Calu3 (cell line): ENCODE measurements at regions of chr15 and their contacts with region 1.

Region 1: GRCh38 chr15:89714775-89715174 is 24.2 kb downstream of the WDR93 start:
- DNase-seq: no peak
- H3K4me3 Mint-ChIP-seq: no peak overlapping the region
- H3K27ac Mint-ChIP-seq: no peak overlapping the region
- H3K4me1 Mint-ChIP-seq: no peaks in the 10 kb centered on the region
- H3K27me3 Mint-ChIP-seq: no peaks in the 10 kb centered on the region
- CTCF ChIP-seq: no peak

Region 2: GRCh38 chr15:89766357-89767311 is 51.9 kb after region 1 on chr15:
- CTCF ChIA-PET with region 1: no interaction called
- intact Hi-C with region 1: loop called (anchors 1 kb)
- DNase-seq: no peak
- H3K4me3 Mint-ChIP-seq: no peak overlapping the region
- H3K27ac Mint-ChIP-seq: no peak overlapping the region
- H3K4me1 Mint-ChIP-seq: peaks cover 21% of the 10 kb centered on the region
- H3K27me3 Mint-ChIP-seq: no peaks in the 10 kb centered on the region
- CTCF ChIP-seq: no peak